ENCODE measurements at regions of chr22 and their contacts with region 1.

Region 1: DNA sequence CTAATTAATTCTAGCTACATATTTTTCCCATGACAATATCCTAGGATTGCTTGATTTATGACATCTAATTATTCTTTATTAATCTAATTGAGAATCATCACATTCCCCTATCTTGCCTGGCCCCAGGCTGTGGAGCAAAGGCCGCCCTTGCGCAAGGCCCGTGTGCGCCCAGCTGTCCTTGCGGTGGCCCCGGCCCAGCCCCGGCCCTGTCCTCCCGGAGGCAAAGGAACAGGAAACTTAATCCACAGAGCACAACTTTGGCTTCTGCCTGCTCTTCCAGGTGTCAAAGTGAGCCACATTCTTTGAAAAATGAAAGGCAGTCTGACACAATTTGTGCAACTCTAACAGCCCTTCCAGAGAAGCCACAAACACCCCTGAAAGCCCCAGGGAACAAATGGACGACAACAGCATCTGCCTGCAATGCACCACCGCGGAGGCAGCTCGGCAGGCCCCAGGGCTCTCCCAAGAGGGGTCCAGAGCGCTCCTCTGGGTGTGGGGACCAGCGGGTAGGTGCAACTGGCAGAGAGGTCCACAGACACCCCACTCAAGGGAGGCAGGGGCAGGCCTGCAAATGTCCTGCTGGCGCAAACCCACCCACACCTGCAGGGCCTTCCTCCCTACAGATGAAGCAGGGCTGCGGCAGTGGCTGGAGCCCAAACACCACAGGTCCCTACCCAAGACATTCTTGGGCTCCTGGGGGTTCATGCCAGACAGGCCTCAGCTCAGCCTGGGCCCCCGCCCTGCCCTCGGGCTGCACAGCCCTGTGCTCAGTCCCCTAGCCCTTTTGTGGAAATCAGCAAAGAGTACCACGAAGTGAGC is 30.3 kb downstream of the GNB1L start:
- DNase-seq: peak; percentile 41
- ATAC-seq: peak; percentile 91
- H3K4me3 ChIP-seq: peak overlapping the region; percentile 11 to 58 (median 34); a peak in 5 of 6 replicates
- H3K27ac ChIP-seq: peak overlapping the region; percentile 77
- H3K4me1 ChIP-seq: peaks cover 48% of the 10 kb centered on the region
- H3K27me3 ChIP-seq: no peaks in the 10 kb centered on the region
- CTCF ChIP-seq: no peak
- EP300 ChIP-seq: peak in 1 of 2 experiments; percentile 49; a peak in 2 of 4 replicates
- POLR2A ChIP-seq: 0 out of 4 replicates have a peak, but pooled peaks of 1 of the 2 experiments have one; percentile 38
- RAD21 ChIP-seq: no peak

Region 2: DNA sequence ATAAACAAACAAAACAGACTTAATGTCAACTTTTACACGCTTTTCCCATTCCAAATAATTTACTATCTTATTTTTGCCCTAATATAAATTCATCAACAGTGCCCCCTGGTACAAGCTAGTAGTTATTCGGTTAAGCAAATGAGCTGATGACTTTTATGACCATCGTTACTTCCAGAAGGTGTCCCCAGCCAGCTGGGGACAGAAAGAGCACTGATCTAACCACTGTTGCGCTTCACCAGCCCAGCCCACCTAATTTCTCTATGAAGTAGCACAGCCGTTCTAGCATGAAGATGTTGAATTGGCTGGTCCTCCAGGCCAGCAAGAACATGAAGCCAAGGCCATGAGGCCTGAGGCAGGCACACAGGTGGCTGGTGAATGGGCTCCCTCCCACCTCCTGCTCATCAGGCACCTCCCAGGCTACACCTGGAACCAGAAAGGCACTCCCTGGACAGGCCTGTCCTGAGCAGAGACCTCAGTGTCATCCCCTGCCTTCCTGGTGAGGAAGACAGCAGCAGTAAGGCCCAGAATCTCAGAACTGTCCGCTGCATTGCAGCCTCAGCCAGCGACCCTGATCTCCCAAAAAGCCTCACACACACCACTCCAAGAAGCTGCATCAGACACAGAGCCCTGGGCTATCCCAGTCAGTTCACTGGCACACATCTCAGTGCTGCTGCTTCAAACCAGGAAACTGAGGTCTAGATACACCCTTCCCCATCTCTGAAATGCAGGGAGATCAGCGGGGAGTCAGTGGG is 17.4 kb after region 1 on chr22:
- CTCF ChIA-PET with region 1: no interaction called
- POLR2A ChIA-PET with region 1: interaction called, 4 read pairs
- in situ Hi-C with region 1: no loop called
- intact Hi-C with region 1: loop called (anchors 1 kb)
- DNase-seq: no peak
- ATAC-seq: no peak
- H3K4me3 ChIP-seq: no peak overlapping the region
- H3K27ac ChIP-seq: peak overlapping the region; percentile 62
- H3K4me1 ChIP-seq: peaks cover 28% of the 10 kb centered on the region
- H3K27me3 ChIP-seq: no peaks in the 10 kb centered on the region
- CTCF ChIP-seq: no peak
- EP300 ChIP-seq: no peak
- POLR2A ChIP-seq: no peak
- RAD21 ChIP-seq: no peak

Region 3: DNA sequence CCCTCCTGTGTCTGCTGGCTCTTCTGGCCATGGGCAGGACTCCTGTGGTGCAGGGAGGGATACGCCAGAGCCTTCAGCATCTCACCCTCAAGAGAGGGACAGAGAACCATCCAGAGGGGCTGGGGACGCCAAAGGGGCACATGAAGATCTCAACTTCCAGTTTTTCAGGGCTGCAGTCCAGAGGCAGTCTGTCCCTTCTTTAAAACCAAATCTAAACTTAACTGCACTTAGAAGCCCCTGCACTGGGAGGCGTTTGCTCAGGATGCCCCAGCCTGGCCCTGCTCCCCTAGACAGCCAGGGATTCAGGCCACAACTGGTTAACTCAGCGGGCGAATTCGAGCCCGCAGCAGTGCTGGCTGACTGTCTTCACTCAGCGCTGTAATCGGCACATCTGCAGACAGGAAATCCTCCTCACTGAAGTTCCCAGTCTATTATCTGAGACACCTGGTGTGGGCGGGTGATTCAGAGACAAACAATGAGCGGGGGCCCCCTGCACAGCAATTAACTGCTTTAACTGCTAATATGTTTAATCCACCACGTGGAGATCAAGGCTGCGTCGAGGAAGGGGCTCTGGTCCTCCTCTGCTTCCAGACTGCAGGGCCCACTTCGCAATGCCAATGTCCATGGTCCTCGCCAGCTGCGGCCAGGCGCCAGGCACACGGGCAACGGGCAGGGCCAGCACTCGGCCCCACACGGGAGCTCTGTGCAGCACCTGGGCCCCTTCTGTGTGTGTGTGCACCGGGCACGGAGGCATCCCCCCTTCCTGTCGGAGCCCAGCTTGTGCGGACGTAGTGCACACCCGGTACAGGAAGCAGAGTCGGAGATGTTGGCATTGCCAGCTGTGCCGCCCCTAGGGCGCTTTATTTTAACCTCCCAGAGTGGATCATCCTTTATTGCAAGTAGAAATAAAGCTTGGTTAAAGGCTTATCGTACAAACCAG is 67.2 kb after region 1 on chr22:
- CTCF ChIA-PET with region 1: no interaction called
- POLR2A ChIA-PET with region 1: no interaction called
- in situ Hi-C with region 1: no loop called
- intact Hi-C with region 1: loop called (anchors 5 kb)
- DNase-seq: peak; percentile 71
- ATAC-seq: peak; percentile 70
- H3K4me3 ChIP-seq: no peak overlapping the region; a peak in 1 of 6 replicates
- H3K27ac ChIP-seq: peak overlapping the region; percentile 66
- H3K4me1 ChIP-seq: peaks cover 27% of the 10 kb centered on the region
- H3K27me3 ChIP-seq: no peaks in the 10 kb centered on the region
- CTCF ChIP-seq: peak; percentile 6; the same call in 1 of the 2 replicates
- EP300 ChIP-seq: peak in 1 of 2 experiments; percentile 47; a peak in 1 of 4 replicates
- POLR2A ChIP-seq: no peak
- RAD21 ChIP-seq: no peak

Measured in HepG2 (cell line).